ENCODE measurements at regions of chrX and their contacts with region 1.

Region 1: DNA sequence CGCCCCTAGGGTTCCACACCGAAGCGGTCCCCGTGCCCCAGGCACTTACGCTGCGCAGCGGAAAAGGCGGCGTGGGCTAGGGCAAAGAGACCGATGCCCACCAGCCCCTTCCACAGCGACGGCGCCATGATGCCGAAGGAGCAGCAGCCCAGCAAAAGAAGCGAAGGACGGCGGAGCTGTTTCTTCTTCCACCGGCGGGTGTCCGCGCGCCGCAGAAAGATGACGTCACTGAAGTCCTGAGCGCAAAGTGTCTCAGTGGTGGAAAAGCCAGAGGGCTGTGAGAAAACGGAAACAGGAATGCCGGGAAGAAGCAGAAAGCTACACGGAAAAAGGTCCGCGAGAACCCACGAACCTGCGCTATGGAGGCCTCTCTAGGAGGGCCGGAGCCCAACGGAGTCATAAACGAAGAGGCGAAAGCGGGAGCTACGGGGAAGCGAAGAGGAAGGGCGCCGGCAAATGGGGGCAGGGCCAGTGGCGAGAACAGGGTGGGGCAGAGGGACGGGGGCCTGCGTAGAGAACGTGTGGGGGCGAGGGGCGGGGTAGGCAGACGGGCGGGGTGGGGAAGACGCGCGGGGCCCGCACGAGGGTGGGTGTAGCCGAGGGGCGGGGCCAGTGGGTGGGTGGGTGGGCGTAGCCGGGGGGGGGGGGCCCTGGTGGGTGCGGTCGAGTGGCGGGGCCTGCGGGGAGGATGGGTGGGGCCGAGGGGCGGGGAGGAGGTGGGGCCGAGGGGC is at the start of gene MMGT1:
- DNase-seq: peak; percentile 83
- H3K4me3 Mint-ChIP-seq: peak within 1 kb of the TSS; percentile 88
- H3K27ac Mint-ChIP-seq: peak within 1 kb of the TSS; percentile 98
- H3K4me1 Mint-ChIP-seq: peaks cover 42% of the 10 kb centered on the region
- H3K27me3 Mint-ChIP-seq: no peaks in the 10 kb centered on the region
- total RNA-seq, gene MMGT1: 19.1 to 23.1 TPM

Region 2: GRCh38 chrX:135985141-135985972 is 11.6 kb after region 1 on chrX and contains the start of gene SLC9A6:
- CTCF ChIA-PET with region 1: interaction called, 13 read pairs
- POLR2A ChIA-PET with region 1: interaction called, 3 read pairs
- DNase-seq: peak; percentile 64
- H3K4me3 Mint-ChIP-seq: peak within 1 kb of the TSS; percentile 93
- H3K27ac Mint-ChIP-seq: peak within 1 kb of the TSS; percentile 89
- H3K4me1 Mint-ChIP-seq: peaks cover 47% of the 10 kb centered on the region
- H3K27me3 Mint-ChIP-seq: no peaks in the 10 kb centered on the region
- total RNA-seq, gene SLC9A6: 17.2 to 17.6 TPM

Measured in activated CD4-positive, alpha-beta T cell treated with anti-CD3 and anti-CD28 coated beads, Interleukin-2, amount 10 ng/mL, durations not matched to agents 7 days and 5 days (primary cell).